ENCODE measurements at regions of chr20 and their contacts with region 1.

Region 1: GRCh38 chr20:10922941-10923340 is 249.1 kb upstream of the JAG1 start:
- DNase-seq: peak; percentile 97
- ATAC-seq: peak; percentile 79
- H3K4me3 ChIP-seq: peak overlapping the region; percentile 23; the same call in 1 of the 2 replicates
- H3K27ac ChIP-seq: peak overlapping the region; percentile 69
- H3K4me1 ChIP-seq: peaks cover 64% of the 10 kb centered on the region
- H3K27me3 ChIP-seq: no peaks in the 10 kb centered on the region
- CTCF ChIP-seq: no peak

Region 2: DNA sequence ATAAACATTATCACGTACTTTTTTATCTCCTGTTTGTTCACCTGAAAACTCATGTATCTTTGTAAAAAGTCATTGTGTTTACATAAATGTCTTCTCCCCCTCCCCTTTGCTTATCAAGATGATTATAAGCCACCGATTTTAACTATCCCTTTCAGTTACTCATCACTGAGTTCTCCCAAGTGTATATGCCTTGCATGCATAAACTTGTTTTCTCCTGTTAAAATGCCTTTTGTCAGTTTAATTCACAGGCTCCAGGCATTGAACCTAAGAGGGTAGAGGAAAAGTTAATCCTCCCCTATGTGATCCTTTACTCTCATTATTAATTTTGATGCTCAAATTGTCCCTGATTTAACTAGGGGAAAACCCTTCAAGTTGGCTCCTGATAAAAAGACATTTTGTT is 863.9 kb before region 1 on chr20:
- CTCF ChIA-PET with region 1: no interaction called
- POLR2A ChIA-PET with region 1: no interaction called
- intact Hi-C with region 1: loop called (anchors 5 kb)
- DNase-seq: no peak
- ATAC-seq: no peak
- H3K4me3 ChIP-seq: no peak overlapping the region
- H3K27ac ChIP-seq: no peak overlapping the region
- H3K4me1 ChIP-seq: no peaks in the 10 kb centered on the region
- H3K27me3 ChIP-seq: no peaks in the 10 kb centered on the region
- CTCF ChIP-seq: no peak

Region 3: DNA sequence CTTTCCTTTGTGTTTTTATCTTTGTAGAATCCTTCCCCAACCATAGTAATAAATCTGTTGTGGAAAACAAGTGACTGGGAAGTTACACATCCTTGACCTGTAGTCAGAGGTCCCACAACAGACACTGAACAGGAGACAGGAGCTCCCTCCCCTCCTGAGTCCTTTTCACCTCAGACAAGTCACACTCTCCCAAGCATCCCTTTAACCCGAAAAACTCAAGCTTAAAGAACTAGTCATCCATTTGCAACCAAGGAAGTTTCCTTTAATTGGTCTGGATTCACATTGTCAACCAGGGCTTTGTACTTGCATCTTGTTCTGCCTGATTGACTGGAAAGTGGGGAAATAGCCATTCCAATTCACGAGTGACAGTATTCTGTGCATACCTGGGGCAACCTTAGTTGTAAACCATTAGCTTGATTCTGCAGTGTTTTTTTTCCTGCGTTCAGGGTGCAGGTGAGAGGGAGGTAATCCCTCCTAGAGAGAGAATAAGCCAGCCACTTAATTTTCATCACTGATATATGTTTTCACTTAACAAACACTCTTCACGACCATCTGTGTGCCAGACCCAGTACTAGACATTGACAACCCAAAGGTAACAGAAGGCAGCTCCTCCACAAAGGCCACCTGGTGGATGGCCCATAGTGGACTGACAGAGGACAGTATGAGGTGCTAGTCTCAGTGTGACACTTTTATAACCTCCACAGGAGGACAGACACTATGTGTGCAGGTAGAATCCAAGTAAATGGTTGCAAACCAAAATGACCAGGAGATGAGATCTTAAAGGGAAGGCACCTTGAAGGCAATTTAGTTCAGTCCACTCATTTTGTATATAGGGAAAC is 375.4 kb before region 1 on chr20:
- CTCF ChIA-PET with region 1: no interaction called
- POLR2A ChIA-PET with region 1: no interaction called
- intact Hi-C with region 1: no loop called
- DNase-seq: peak; percentile 19
- ATAC-seq: no peak
- H3K4me3 ChIP-seq: no peak overlapping the region
- H3K27ac ChIP-seq: no peak overlapping the region
- H3K4me1 ChIP-seq: peaks cover 20% of the 10 kb centered on the region
- H3K27me3 ChIP-seq: no peaks in the 10 kb centered on the region
- CTCF ChIP-seq: 0 out of 2 replicates have a peak, but pooled peaks have one; percentile 11

Region 4: DNA sequence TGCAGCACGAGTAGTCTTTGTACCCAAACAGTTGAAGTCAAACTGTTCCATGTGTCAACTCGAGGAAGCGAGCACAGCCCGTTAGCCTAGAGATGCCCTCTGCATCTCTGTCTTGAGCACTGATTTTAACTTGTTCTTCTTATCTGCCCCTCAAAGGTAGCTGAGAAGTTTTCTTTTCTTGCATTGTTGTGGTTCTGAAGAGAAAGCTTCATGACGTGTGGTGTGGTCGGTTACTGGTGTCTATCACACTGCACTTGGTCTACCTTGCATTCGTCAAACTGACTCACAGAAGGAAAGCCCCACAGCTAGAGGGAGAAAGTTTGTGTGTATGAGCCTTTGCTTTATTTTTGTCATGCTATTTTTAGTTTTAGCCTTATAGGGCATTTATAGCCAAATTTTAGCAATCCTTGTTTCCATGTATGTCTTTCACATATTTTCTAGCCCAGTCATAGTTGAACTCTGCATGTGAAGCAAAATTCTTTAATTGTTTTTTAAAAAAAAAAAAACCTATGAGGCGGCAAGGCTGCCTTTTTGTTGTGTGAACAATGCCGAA is 364.2 kb before region 1 on chr20:
- CTCF ChIA-PET with region 1: no interaction called
- POLR2A ChIA-PET with region 1: no interaction called
- intact Hi-C with region 1: loop called (anchors 5 kb)
- DNase-seq: peak; percentile 92
- ATAC-seq: peak; percentile 75
- H3K4me3 ChIP-seq: peak overlapping the region; percentile 22; the same call in 1 of the 2 replicates
- H3K27ac ChIP-seq: peak overlapping the region; percentile 96
- H3K4me1 ChIP-seq: peaks cover 74% of the 10 kb centered on the region
- H3K27me3 ChIP-seq: no peaks in the 10 kb centered on the region
- CTCF ChIP-seq: no peak; the same call in 1 of the 2 replicates

Region 5: GRCh38 chr20:10708351-10709185 is 214.4 kb before region 1 on chr20:
- CTCF ChIA-PET with region 1: no interaction called
- POLR2A ChIA-PET with region 1: no interaction called
- intact Hi-C with region 1: loop called (anchors 5 kb)
- DNase-seq: peak; percentile 92
- ATAC-seq: peak; percentile 30
- H3K4me3 ChIP-seq: no peak overlapping the region
- H3K27ac ChIP-seq: peak overlapping the region; percentile 79
- H3K4me1 ChIP-seq: peaks cover 52% of the 10 kb centered on the region
- H3K27me3 ChIP-seq: no peaks in the 10 kb centered on the region
- CTCF ChIP-seq: no peak

Region 6: GRCh38 chr20:10982692-10983091 is 59.8 kb after region 1 on chr20:
- CTCF ChIA-PET with region 1: no interaction called
- POLR2A ChIA-PET with region 1: no interaction called
- intact Hi-C with region 1: loop called (anchors 5 kb)
- DNase-seq: peak; percentile 72
- ATAC-seq: peak; percentile 95
- H3K4me3 ChIP-seq: no peak overlapping the region
- H3K27ac ChIP-seq: no peak overlapping the region
- H3K4me1 ChIP-seq: peaks cover 12% of the 10 kb centered on the region; the same call in 1 of the 2 replicates
- H3K27me3 ChIP-seq: no peaks in the 10 kb centered on the region
- CTCF ChIP-seq: no peak

Region 7: GRCh38 chr20:11001767-11002540 is 79.0 kb after region 1 on chr20:
- CTCF ChIA-PET with region 1: no interaction called
- POLR2A ChIA-PET with region 1: interaction called, 5 read pairs
- intact Hi-C with region 1: loop called (anchors 2 kb)
- DNase-seq: peak; percentile 99
- ATAC-seq: peak; percentile 99
- H3K4me3 ChIP-seq: 0 out of 2 replicates have a peak overlapping the region, but pooled peaks have one; percentile 7
- H3K27ac ChIP-seq: peak overlapping the region; percentile 93
- H3K4me1 ChIP-seq: peaks cover 24% of the 10 kb centered on the region
- H3K27me3 ChIP-seq: no peaks in the 10 kb centered on the region
- CTCF ChIP-seq: no peak

Region 8: DNA sequence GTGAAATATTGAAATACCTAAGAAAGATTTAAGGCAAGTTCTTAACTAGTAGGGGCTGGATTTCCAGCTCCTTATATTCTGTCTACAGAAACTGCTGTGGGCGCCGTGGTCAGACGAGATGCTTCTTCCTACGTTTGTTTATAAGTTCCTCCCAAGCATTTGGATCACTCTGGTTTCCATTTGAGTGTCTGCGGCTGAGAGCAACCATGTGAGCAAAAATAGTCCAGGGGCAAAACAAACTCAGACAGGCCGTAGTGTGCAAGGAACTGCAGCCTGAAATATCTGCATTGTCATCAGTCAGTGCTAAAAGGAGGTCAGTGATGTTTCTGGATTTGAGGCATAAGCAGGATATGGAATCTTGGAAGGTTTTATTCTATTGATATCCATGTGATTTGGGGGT is 236.8 kb after region 1 on chr20:
- CTCF ChIA-PET with region 1: no interaction called
- POLR2A ChIA-PET with region 1: no interaction called
- intact Hi-C with region 1: loop called (anchors 10 kb)
- DNase-seq: no peak
- ATAC-seq: no peak
- H3K4me3 ChIP-seq: no peak overlapping the region
- H3K27ac ChIP-seq: no peak overlapping the region
- H3K4me1 ChIP-seq: peaks cover 29% of the 10 kb centered on the region
- H3K27me3 ChIP-seq: no peaks in the 10 kb centered on the region
- CTCF ChIP-seq: no peak